Caco-2 (cell line): ENCODE measurements at regions of chr1 and their contacts with region 1.

Region 1: DNA sequence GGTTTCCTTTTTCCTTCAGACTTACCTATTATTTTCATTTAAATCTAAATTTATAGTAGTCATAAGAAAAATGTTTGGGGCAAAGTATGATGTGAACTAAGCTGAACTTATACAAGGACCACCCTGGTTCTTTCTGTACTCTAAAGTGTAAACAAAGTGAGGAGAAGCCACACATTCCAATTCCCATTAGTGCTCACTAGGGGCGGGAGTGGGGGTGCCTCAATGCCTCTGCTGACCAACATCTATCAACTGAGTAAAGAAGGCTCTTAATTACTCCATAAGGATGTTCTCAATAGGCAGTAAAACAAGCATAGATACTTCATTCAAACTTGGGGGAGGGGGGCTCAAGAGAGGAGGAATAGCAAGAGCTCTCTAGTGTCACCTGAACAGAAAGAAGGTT is 151.7 kb downstream of the CDC42BPA start:
- DNase-seq: no peak
- H3K4me3 ChIP-seq: no peak overlapping the region
- H3K4me3 Mint-ChIP-seq: no peak overlapping the region
- H3K27ac Mint-ChIP-seq: no peak overlapping the region
- H3K4me1 ChIP-seq: 0 out of 2 replicates have a peak, but pooled peaks cover 5% of the 10 kb centered on the region
- H3K4me1 Mint-ChIP-seq: peaks cover 17% of the 10 kb centered on the region
- H3K27me3 ChIP-seq: no peaks in the 10 kb centered on the region
- H3K27me3 Mint-ChIP-seq: no peaks in the 10 kb centered on the region
- CTCF ChIP-seq: no peak

Region 2: GRCh38 chr1:227038401-227038800 is 128.2 kb before region 1 on chr1:
- CTCF ChIA-PET with region 1: no interaction called
- POLR2A ChIA-PET with region 1: no interaction called
- intact Hi-C with region 1: no loop called
- DNase-seq: no peak
- H3K4me3 ChIP-seq: no peak overlapping the region
- H3K4me3 Mint-ChIP-seq: no peak overlapping the region
- H3K27ac Mint-ChIP-seq: no peak overlapping the region
- H3K4me1 ChIP-seq: no peaks in the 10 kb centered on the region
- H3K4me1 Mint-ChIP-seq: no peaks in the 10 kb centered on the region
- H3K27me3 ChIP-seq: no peaks in the 10 kb centered on the region
- H3K27me3 Mint-ChIP-seq: no peaks in the 10 kb centered on the region
- CTCF ChIP-seq: no peak

Region 3: GRCh38 chr1:227225715-227226346 is 59.3 kb after region 1 on chr1:
- CTCF ChIA-PET with region 1: no interaction called
- POLR2A ChIA-PET with region 1: no interaction called
- intact Hi-C with region 1: loop called (anchors 10 kb)
- DNase-seq: no peak
- H3K4me3 ChIP-seq: no peak overlapping the region
- H3K4me3 Mint-ChIP-seq: no peak overlapping the region
- H3K27ac Mint-ChIP-seq: no peak overlapping the region
- H3K4me1 ChIP-seq: peaks cover 4% of the 10 kb centered on the region; the same call in 1 of the 2 replicates
- H3K4me1 Mint-ChIP-seq: peaks cover 11% of the 10 kb centered on the region
- H3K27me3 ChIP-seq: no peaks in the 10 kb centered on the region
- H3K27me3 Mint-ChIP-seq: no peaks in the 10 kb centered on the region
- CTCF ChIP-seq: no peak